Aorta (tissue), 5 donors: ENCODE measurements at regions of chr5 and their contacts with region 1.

Region 1: GRCh38 chr5:151051066-151051930 is 29.5 kb downstream of the TNIP1 start:
- DNase-seq: peak; percentile 89 to 93
- ATAC-seq: peak; percentile 86
- H3K4me3 ChIP-seq: no peak overlapping the region
- H3K27ac ChIP-seq: no peak overlapping the region
- H3K4me1 ChIP-seq: no peaks in the 10 kb centered on the region
- H3K27me3 ChIP-seq: no peaks in the 10 kb centered on the region

Region 2: GRCh38 chr5:151002250-151002649 is 49.0 kb before region 1 on chr5:
- intact Hi-C with region 1: loop called (anchors 2 to 5 kb)
- DNase-seq: no peak
- ATAC-seq: no peak
- H3K4me3 ChIP-seq: no peak overlapping the region
- H3K27ac ChIP-seq: no peak overlapping the region
- H3K4me1 ChIP-seq: peaks cover 0 to 3% of the 10 kb centered on the region in 2 donors
- H3K27me3 ChIP-seq: no peaks in the 10 kb centered on the region

Region 3: GRCh38 chr5:151338734-151339133 is 287.4 kb after region 1 on chr5:
- intact Hi-C with region 1: no loop called
- DNase-seq: no peak
- ATAC-seq: no peak
- H3K4me3 ChIP-seq: no peak overlapping the region
- H3K27ac ChIP-seq: no peak overlapping the region
- H3K4me1 ChIP-seq: no peaks in the 10 kb centered on the region
- H3K27me3 ChIP-seq: no peaks in the 10 kb centered on the region